Activated T-helper 1 cell treated with anti-CD3 and anti-CD28 coated beads, Interleukin-12 subunit alpha, Interleukin-12 subunit beta, Interleukin-2, Interleukin-4 antibody, amounts not matched to agents 30 ng/mL and 10 ng/mL and 1 ng/mL, durations not matched to agents 14 hours and 24 hours and 36 hours (primary cell): ENCODE measurements at regions of chrX and their contacts with region 1.

Region 1: GRCh38 chrX:124346117-124346876 is at the start of gene SH2D1A:
- DNase-seq: no peak
- H3K4me3 Mint-ChIP-seq: peak within 1 kb of the TSS; percentile 92
- H3K27ac Mint-ChIP-seq: peak within 1 kb of the TSS; percentile 97
- H3K4me1 Mint-ChIP-seq: peaks cover 49% of the 10 kb centered on the region
- H3K27me3 Mint-ChIP-seq: no peaks in the 10 kb centered on the region
- total RNA-seq, gene SH2D1A: 50.4 and 56.3 TPM in 2 replicates

Region 2: DNA sequence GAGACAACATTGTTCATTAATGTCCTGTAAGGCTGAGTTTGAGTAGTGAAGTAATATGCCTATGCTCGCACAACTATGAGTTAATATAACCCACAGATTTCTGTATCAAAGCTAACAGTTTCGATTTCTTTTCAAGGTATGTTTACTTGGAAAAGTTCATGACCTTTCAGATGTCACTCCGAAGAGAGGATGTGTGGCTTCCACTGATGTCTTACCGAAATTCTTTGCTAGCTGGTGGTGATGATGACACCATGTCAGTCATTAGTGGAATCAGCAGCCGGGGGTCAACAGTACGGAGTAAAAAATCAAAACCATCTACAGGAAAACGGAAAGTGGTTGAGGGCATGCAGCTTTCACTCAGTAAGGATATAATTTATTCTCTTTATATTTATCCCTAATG is 259.9 kb before region 1 on chrX:
- intact Hi-C with region 1: loop called (anchors 5 kb)
- DNase-seq: peak; percentile 25
- H3K4me3 Mint-ChIP-seq: peak overlapping the region; percentile 63
- H3K27ac Mint-ChIP-seq: peak overlapping the region; percentile 88
- H3K4me1 Mint-ChIP-seq: peaks cover 20% of the 10 kb centered on the region
- H3K27me3 Mint-ChIP-seq: no peaks in the 10 kb centered on the region

Region 3: GRCh38 chrX:124217304-124218251 is 128.7 kb before region 1 on chrX:
- intact Hi-C with region 1: loop called (anchors 1 kb)
- DNase-seq: peak; percentile 56
- H3K4me3 Mint-ChIP-seq: peak overlapping the region; percentile 79
- H3K27ac Mint-ChIP-seq: peak overlapping the region; percentile 93
- H3K4me1 Mint-ChIP-seq: peaks cover 76% of the 10 kb centered on the region
- H3K27me3 Mint-ChIP-seq: peaks cover 2% of the 10 kb centered on the region

Region 4: GRCh38 chrX:124300405-124300804 is 45.9 kb before region 1 on chrX:
- intact Hi-C with region 1: loop called (anchors 2 kb)
- DNase-seq: no peak
- H3K4me3 Mint-ChIP-seq: peak overlapping the region; percentile 9
- H3K27ac Mint-ChIP-seq: peak overlapping the region; percentile 68
- H3K4me1 Mint-ChIP-seq: peaks cover 17% of the 10 kb centered on the region
- H3K27me3 Mint-ChIP-seq: no peaks in the 10 kb centered on the region

Region 5: DNA sequence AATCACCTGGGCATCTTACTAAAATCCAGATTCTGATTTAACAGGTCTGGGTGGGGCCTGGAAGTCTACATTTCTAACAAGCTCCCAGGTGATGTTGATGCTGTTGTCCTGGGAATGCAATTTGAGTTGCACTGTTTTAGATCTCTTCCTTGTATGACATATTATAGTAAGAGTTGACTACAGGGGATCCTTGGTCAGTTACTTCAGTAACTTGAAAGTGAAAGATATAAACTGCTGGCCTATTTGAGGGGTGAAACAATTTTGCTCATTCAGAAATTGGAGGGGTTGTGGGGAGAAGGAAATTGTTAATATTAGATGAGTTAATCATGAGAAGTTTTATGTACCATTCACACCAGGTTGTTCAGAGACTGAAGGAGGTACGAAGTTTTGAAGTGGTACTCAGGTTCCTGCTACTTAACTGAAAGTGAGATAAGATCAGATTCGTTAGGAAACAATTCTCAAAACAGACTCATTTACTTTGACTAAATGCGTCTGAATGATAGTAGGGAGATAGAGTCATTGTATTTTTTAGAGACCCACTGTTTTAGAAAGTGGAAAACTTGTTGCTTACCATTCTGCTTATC is 12.6 kb after region 1 on chrX:
- intact Hi-C with region 1: loop called (anchors 1 kb)
- DNase-seq: no peak
- H3K4me3 Mint-ChIP-seq: peak overlapping the region; percentile 72
- H3K27ac Mint-ChIP-seq: peak overlapping the region; percentile 90
- H3K4me1 Mint-ChIP-seq: peaks cover 60% of the 10 kb centered on the region
- H3K27me3 Mint-ChIP-seq: no peaks in the 10 kb centered on the region

Region 6: GRCh38 chrX:124534530-124534929 is 188.2 kb after region 1 on chrX:
- intact Hi-C with region 1: no loop called
- DNase-seq: no peak
- H3K4me3 Mint-ChIP-seq: no peak overlapping the region
- H3K27ac Mint-ChIP-seq: no peak overlapping the region
- H3K4me1 Mint-ChIP-seq: no peaks in the 10 kb centered on the region
- H3K27me3 Mint-ChIP-seq: no peaks in the 10 kb centered on the region